ENCODE measurements at regions of chr17 and their contacts with region 1.

Region 1: DNA sequence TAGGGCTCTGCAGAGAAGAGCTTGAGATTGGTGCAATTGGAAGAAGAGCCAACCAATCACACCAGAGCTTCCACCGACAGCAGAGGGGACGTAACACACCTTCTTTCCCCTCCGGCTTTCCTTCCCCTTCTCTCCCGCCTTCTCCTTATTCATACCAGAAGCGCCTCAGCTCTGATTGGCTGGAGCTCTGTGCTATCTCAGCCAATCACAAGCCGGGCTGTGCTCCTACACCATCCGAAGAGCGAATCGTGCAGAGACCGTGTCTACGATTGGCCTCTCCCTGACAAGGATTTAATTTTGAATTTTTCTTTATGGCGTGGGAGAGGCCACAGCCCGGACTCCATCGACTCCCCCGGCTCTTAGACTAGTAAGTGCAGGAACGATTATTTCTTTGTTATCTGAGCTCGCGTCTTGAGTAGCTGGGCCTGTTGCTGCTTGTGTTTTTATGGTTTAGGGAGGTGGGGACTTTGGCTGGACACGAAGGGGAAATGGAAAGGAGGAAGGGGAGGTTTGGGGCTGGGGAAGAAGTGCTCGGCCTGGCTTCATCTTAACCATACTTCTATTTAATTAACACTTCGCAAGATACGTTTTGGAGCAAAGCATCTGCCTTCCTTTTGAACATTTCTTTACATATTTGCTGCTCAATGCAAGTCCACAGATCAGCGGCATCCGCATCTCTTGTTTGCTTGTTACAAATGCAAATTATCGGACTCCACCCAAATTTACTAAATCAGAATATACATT is at the start of gene PRR11:
- H3K4me3 ChIP-seq: peak within 1 kb of the TSS; percentile 80
- H3K27ac ChIP-seq: peak within 1 kb of the TSS; percentile 98
- H3K4me1 ChIP-seq: peaks cover 23% of the 10 kb centered on the region
- CTCF ChIP-seq: no peak

Region 2: DNA sequence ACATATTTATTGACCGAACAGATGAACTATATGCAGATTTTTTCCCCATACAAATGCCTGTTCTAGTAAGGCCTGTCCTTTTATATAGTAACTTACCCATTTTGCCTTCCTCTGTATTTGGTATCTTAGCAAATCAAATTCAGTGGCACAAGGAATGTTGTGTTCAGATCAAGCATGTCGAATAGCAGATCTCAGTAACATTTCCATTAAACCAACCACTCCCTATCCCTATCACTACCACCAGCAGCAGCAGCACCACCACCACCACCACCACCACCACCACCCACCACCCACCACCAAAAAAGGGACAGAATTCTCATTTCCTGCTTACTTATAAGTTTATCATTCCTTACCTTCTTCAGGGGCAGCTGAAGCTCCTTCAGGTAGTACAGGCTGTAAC is 143.6 kb before region 1 on chr17:
- CTCF ChIA-PET with region 1: no interaction called
- POLR2A ChIA-PET with region 1: no interaction called
- H3K4me3 ChIP-seq: no peak overlapping the region
- H3K27ac ChIP-seq: no peak overlapping the region
- H3K4me1 ChIP-seq: peaks cover 13% of the 10 kb centered on the region
- CTCF ChIP-seq: no peak

Region 3: DNA sequence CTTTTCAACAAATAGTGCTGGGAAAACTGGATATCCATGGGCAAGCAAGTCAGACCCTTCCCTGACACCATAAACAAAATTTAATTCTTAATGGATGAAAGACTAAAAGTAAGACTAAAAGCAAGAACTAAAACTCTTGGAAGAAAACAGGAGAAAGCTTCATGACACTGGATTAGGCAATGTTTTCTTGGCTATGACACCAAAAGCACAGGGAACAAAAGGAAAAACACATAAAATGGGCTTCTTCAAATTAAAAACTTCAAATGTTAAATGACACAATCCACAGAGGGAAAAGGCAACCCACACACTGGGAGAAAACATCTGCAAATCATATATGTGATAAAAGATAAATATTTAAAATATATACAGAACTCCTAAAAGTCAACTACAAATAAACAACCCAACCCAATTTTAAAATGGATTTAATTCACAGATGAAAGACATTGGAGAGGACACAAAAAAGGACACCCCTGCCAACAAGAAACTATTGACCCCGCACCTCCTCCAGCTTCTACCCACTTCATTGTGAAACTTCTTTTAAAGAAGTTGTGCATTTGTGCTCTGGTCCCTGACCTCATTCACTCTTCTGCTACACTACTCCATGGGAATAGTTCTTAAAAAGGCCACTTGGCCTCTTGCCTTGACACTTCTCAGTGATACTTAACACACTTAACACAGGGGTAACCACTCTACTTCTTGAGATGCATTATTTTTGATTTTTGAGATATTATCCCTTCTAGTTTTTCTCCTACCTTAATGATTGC is 129.3 kb before region 1 on chr17:
- CTCF ChIA-PET with region 1: no interaction called
- POLR2A ChIA-PET with region 1: no interaction called
- H3K4me3 ChIP-seq: no peak overlapping the region
- H3K27ac ChIP-seq: no peak overlapping the region
- H3K4me1 ChIP-seq: no peaks in the 10 kb centered on the region
- CTCF ChIP-seq: no peak

Region 4: GRCh38 chr17:59093702-59094231 is 61.8 kb before region 1 on chr17:
- CTCF ChIA-PET with region 1: interaction called, 3 read pairs
- POLR2A ChIA-PET with region 1: interaction called, 30 read pairs
- H3K4me3 ChIP-seq: peak overlapping the region; percentile 27
- H3K27ac ChIP-seq: peak overlapping the region; percentile 62
- H3K4me1 ChIP-seq: peaks cover 31% of the 10 kb centered on the region
- CTCF ChIP-seq: no peak

Region 5: DNA sequence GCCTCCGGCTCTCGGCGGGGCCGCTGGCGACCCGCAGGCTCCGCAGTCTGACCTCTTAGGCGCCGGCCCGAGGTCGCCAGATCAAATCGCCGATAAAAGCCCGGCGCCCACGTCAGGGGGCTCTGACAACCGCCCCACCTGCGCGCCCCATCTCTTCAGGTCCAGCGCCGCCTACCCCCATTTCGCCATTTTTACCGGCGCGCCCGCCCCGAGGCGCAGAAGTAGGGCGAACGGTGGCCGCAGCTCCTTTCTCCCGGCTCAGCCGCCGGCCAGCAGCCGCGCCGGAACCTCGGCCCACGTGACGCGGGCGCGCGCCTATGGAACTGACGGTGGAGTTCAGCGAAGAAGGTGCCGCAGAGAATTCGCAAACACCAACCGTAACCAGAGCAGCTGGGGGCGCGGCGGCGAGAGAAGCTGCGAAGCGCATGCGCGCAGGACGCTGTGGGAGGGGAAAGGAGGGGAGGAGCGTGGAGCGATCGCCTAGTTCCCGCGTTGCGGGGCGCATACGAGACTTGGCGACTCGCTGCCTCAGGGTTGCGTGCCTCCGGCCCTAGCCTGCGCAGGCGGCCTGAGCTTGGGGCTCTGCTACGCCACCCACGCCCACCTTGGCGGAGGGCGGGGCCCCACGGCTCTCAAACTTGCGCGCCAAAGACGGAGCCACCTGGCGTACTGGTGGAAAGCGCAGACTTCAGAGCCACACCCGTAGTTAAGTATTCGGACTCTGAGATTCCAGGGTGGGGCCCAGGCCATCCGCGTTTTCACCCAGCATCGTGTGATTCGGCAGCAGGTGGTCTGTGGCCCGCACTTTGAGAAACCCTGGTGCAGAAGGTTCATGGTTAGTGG is 48.9 kb before region 1 on chr17 and contains the start of gene TRIM37:
- CTCF ChIA-PET with region 1: no interaction called
- POLR2A ChIA-PET with region 1: interaction called, 56 read pairs
- H3K4me3 ChIP-seq: peak within 1 kb of the TSS; percentile 83
- H3K27ac ChIP-seq: peak within 1 kb of the TSS; percentile 89
- H3K4me1 ChIP-seq: no peaks in the 10 kb centered on the region
- CTCF ChIP-seq: peak; percentile 60

Region 6: GRCh38 chr17:59165902-59166342 is 10.3 kb after region 1 on chr17:
- CTCF ChIA-PET with region 1: interaction called, 10 read pairs
- POLR2A ChIA-PET with region 1: interaction called, 8 read pairs
- H3K4me3 ChIP-seq: no peak overlapping the region
- H3K27ac ChIP-seq: no peak overlapping the region
- H3K4me1 ChIP-seq: peaks cover 5% of the 10 kb centered on the region; the same call in 1 of the 2 replicates
- CTCF ChIP-seq: peak; percentile 37; the same call in 1 of the 2 replicates

Region 7: DNA sequence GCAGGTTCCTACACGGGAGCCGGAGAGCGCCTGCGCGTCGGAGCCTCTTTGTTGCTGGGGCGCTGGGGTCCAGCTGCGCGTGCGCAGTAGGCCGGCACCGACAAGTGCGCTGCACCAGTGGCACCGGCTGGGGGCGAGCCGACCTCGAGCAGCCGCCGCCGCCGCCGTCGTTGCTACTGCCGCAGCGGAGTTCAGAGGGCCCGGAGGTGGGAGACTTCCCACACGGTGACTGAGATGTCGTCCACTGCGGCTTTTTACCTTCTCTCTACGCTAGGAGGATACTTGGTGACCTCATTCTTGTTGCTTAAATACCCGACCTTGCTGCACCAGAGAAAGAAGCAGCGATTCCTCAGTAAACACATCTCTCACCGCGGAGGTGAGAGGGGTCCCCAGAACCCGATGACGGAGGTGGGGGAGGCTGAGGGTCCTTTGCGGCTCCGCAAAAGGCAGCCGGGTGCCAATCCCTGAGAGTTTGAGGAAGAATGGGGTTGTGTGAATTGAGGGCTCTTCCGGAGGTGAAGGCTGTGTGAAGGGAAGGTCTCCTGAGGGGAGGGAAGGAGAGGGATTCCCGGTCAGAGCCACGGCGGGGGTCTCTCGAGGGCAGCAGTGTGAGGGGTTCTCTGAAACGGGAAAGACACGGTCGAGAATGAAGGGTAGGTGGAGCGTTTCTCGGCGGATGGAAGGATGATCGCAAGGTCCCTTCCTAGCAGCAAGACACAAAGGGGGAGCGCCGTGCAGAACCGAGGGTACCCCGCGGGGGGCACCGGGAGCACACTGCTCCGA is 65.0 kb after region 1 on chr17 and contains the start of gene GDPD1:
- CTCF ChIA-PET with region 1: no interaction called
- POLR2A ChIA-PET with region 1: interaction called, 12 read pairs
- H3K4me3 ChIP-seq: peak within 1 kb of the TSS; percentile 75
- H3K27ac ChIP-seq: peak within 1 kb of the TSS; percentile 88
- H3K4me1 ChIP-seq: no peaks in the 10 kb centered on the region
- CTCF ChIP-seq: peak; percentile 88

Measured in HEK293 (cell line).